T-cell (primary cell): ENCODE measurements at regions of chr1 and their contacts with region 1.

Region 1: GRCh38 chr1:150067184-150068036 is at the start of gene VPS45:
- DNase-seq: peak; percentile 53 to 83 (median 69)
- ATAC-seq: peak; percentile 93 to 97 (median 94)
- H3K4me3 ChIP-seq: peak within 1 kb of the TSS; percentile 62 to 97
- H3K4me3 Mint-ChIP-seq: peak within 1 kb of the TSS; percentile 92 to 95 (median 93)
- H3K27ac ChIP-seq: peak within 1 kb of the TSS; percentile 54
- H3K27ac Mint-ChIP-seq: peak within 1 kb of the TSS; percentile 92 to 95
- H3K4me1 ChIP-seq: peaks cover 0 to 10% of the 10 kb centered on the region in 2 experiments
- H3K4me1 Mint-ChIP-seq: peaks cover 30 to 36% (median 33%) of the 10 kb centered on the region in 3 donors
- H3K27me3 ChIP-seq: no peaks in the 10 kb centered on the region
- H3K27me3 Mint-ChIP-seq: no peaks in the 10 kb centered on the region
- total RNA-seq, gene VPS45: 24.9 to 30.7 (median 28.0) TPM

Region 2: GRCh38 chr1:149997585-149998262 is 69.7 kb before region 1 on chr1:
- CTCF ChIA-PET with region 1: no interaction called
- POLR2A ChIA-PET with region 1: no interaction called
- DNase-seq: peak in 1 of 35 experiments; percentile 2
- ATAC-seq: no peak
- H3K4me3 ChIP-seq: no peak overlapping the region
- H3K4me3 Mint-ChIP-seq: no peak overlapping the region
- H3K27ac ChIP-seq: no peak overlapping the region
- H3K27ac Mint-ChIP-seq: no peak overlapping the region
- H3K4me1 ChIP-seq: no peaks in the 10 kb centered on the region
- H3K4me1 Mint-ChIP-seq: peaks cover 17 to 27% (median 22%) of the 10 kb centered on the region in 3 donors
- H3K27me3 ChIP-seq: peaks cover 0 to 18% of the 10 kb centered on the region in 2 experiments
- H3K27me3 Mint-ChIP-seq: no peaks in the 10 kb centered on the region

Region 3: GRCh38 chr1:150089846-150090520 is 22.6 kb after region 1 on chr1:
- CTCF ChIA-PET with region 1: interaction called in 1 of 2 experiments, 12 read pairs
- POLR2A ChIA-PET with region 1: no interaction called
- DNase-seq: no peak
- ATAC-seq: no peak
- H3K4me3 ChIP-seq: no peak overlapping the region
- H3K4me3 Mint-ChIP-seq: no peak overlapping the region
- H3K27ac ChIP-seq: no peak overlapping the region
- H3K27ac Mint-ChIP-seq: peak overlapping the region in 1 of 2 donors; percentile 7
- H3K4me1 ChIP-seq: peaks cover 3 to 6% of the 10 kb centered on the region in 2 experiments
- H3K4me1 Mint-ChIP-seq: peaks cover 13 to 32% (median 26%) of the 10 kb centered on the region in 3 donors
- H3K27me3 ChIP-seq: no peaks in the 10 kb centered on the region
- H3K27me3 Mint-ChIP-seq: no peaks in the 10 kb centered on the region

Region 4: GRCh38 chr1:150149271-150150132 is 82.1 kb after region 1 on chr1 and contains the start of gene PLEKHO1:
- CTCF ChIA-PET with region 1: interaction called in 1 of 2 experiments, 3 read pairs
- POLR2A ChIA-PET with region 1: interaction called in 1 of 2 experiments, 15 read pairs
- DNase-seq: peak; percentile 59 to 88 (median 74)
- ATAC-seq: peak; percentile 73 to 76 (median 75)
- H3K4me3 ChIP-seq: peak within 1 kb of the TSS; percentile 87 to 93
- H3K4me3 Mint-ChIP-seq: peak within 1 kb of the TSS; percentile 91 to 98 (median 95)
- H3K27ac ChIP-seq: peak within 1 kb of the TSS; percentile 88
- H3K27ac Mint-ChIP-seq: peak within 1 kb of the TSS; percentile 98 to 99
- H3K4me1 ChIP-seq: peaks cover 17 to 51% of the 10 kb centered on the region in 2 experiments
- H3K4me1 Mint-ChIP-seq: peaks cover 70 to 74% (median 71%) of the 10 kb centered on the region in 3 donors
- H3K27me3 ChIP-seq: no peaks in the 10 kb centered on the region
- H3K27me3 Mint-ChIP-seq: no peaks in the 10 kb centered on the region
- total RNA-seq, gene PLEKHO1: 68.9 to 183 (median 154) TPM

Region 5: GRCh38 chr1:150162862-150163706 is 95.7 kb after region 1 on chr1:
- CTCF ChIA-PET with region 1: interaction called, 18 to 40 read pairs
- POLR2A ChIA-PET with region 1: no interaction called
- DNase-seq: peak in 2 of 35 experiments; percentile 18 to 49
- ATAC-seq: peak; percentile 10 to 56 (median 22)
- H3K4me3 ChIP-seq: peak overlapping the region in 1 of 2 donors; percentile 35
- H3K4me3 Mint-ChIP-seq: peak overlapping the region in 2 of 3 donors; percentile 7 to 62
- H3K27ac ChIP-seq: peak overlapping the region; percentile 13
- H3K27ac Mint-ChIP-seq: peak overlapping the region; percentile 16 to 53
- H3K4me1 ChIP-seq: peaks cover 27 to 45% of the 10 kb centered on the region in 2 experiments
- H3K4me1 Mint-ChIP-seq: peaks cover 54 to 74% (median 57%) of the 10 kb centered on the region in 3 donors
- H3K27me3 ChIP-seq: no peaks in the 10 kb centered on the region
- H3K27me3 Mint-ChIP-seq: no peaks in the 10 kb centered on the region

Region 6: GRCh38 chr1:150186789-150187559 is 119.6 kb after region 1 on chr1:
- CTCF ChIA-PET with region 1: interaction called, 4 to 56 read pairs
- POLR2A ChIA-PET with region 1: interaction called in 1 of 2 experiments, 8 read pairs
- DNase-seq: peak in 17 of 35 experiments; percentile 1 to 72 (median 13)
- ATAC-seq: peak; percentile 75 to 88 (median 77)
- H3K4me3 ChIP-seq: no peak overlapping the region
- H3K4me3 Mint-ChIP-seq: peak overlapping the region in 1 of 3 donors; percentile 17
- H3K27ac ChIP-seq: no peak overlapping the region
- H3K27ac Mint-ChIP-seq: peak overlapping the region in 1 of 2 donors; percentile 23
- H3K4me1 ChIP-seq: peaks cover 2 to 13% of the 10 kb centered on the region in 2 experiments
- H3K4me1 Mint-ChIP-seq: peaks cover 0 to 11% (median 9%) of the 10 kb centered on the region in 3 donors
- H3K27me3 ChIP-seq: peaks cover 0 to 3% of the 10 kb centered on the region in 2 experiments
- H3K27me3 Mint-ChIP-seq: peaks cover 0 to 3% of the 10 kb centered on the region in 2 donors